ENCODE measurements at regions of chr16 and their contacts with region 1.

Region 1: GRCh38 chr16:3983081-3983520 is 102.6 kb upstream of the CREBBP start:
- DNase-seq: peak; percentile 72
- ATAC-seq: peak; percentile 87 to 90

Region 2: GRCh38 chr16:4064950-4065352 is 81.8 kb after region 1 on chr16:
- intact Hi-C with region 1: no loop called
- DNase-seq: no peak
- ATAC-seq: no peak

Region 3: GRCh38 chr16:4116337-4117249 is 133.5 kb after region 1 on chr16 and contains the start of gene ADCY9:
- intact Hi-C with region 1: loop called in 1 of 2 experiments (anchors 5 kb)
- DNase-seq: peak; percentile 83
- ATAC-seq: peak; percentile 85 to 92
- total RNA-seq, gene ADCY9: 22.6 to 25.9 TPM

Region 4: DNA sequence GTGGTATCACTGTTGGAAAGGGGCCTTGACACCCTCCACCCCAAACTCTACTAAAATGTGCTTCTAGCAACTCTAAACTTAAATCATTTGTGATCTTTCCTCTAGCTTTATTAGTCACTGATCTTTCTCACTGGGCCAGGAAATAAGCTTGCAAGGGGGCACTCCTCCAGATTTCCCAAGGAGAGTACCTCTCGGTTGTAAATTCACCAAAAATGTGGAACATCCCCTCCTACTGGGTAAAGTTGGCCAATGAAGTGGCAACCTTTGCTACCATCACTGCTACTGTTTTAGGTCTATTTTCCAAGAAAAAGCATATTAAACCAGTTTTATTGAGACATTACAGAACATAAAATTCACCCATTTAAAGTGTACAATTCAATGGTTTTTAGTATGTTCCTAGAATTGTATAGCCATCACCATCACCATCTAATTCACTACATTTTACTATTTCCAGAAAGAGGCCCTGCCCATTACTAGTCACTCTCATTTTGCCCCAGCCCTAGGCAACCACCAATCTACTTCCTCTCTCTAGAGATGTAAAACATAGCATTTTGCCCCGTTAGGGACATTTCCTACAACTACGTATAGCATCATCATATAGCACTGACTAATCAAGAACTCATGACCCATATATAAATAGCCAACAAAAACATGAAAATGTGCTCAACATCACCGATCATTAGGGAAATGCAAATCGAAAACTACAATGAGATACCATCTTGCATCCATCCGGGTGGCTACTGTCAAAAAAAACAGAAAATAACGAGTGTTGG is 177.7 kb after region 1 on chr16:
- intact Hi-C with region 1: loop called in 1 of 2 experiments (anchors 10 kb)
- DNase-seq: no peak
- ATAC-seq: no peak

Region 5: GRCh38 chr16:4176612-4177417 is 193.7 kb after region 1 on chr16:
- intact Hi-C with region 1: loop called in 1 of 2 experiments (anchors 10 kb)
- DNase-seq: no peak
- ATAC-seq: peak in 1 of 2 donors; percentile 28

Region 6: GRCh38 chr16:4253394-4254150 is 270.5 kb after region 1 on chr16:
- intact Hi-C with region 1: loop called in 1 of 2 experiments (anchors 5 kb)
- DNase-seq: peak; percentile 100
- ATAC-seq: peak; percentile 98

Region 7: GRCh38 chr16:4261557-4262172 is 278.6 kb after region 1 on chr16:
- intact Hi-C with region 1: loop called in 1 of 2 experiments (anchors 10 kb)
- DNase-seq: no peak
- ATAC-seq: no peak